OCI-LY7 (cell line): ENCODE measurements at regions of chr18 and their contacts with region 1.

Region 1: DNA sequence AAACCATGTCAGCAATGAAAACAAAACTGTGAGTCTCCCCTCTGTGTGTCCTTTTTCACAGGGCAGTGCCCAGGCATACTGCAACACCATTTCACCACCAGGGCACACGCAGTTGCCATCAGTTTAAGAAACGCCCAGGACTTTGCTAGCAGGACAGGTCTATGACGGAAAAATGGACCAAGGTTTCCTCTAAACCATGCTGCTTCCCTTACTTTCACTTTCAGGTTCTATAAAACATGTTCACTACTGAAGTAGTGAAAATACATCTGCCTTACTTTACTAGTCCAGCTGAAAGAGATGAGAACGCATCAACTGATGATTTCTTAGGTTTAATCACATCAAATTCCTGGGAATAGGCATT is 110.5 kb downstream of the TCF4 start:
- DNase-seq: peak; percentile 42
- H3K4me3 ChIP-seq: peak overlapping the region; percentile 73
- H3K27ac ChIP-seq: peak overlapping the region; percentile 65
- H3K4me1 ChIP-seq: peaks cover 22% of the 10 kb centered on the region
- CTCF ChIP-seq: no peak

Region 2: GRCh38 chr18:55489034-55489986 is 11.8 kb after region 1 on chr18:
- CTCF ChIA-PET with region 1: no interaction called
- POLR2A ChIA-PET with region 1: interaction called, 11 read pairs
- intact Hi-C with region 1: no loop called
- DNase-seq: peak; percentile 49
- H3K4me3 ChIP-seq: peak overlapping the region; percentile 52
- H3K27ac ChIP-seq: peak overlapping the region; percentile 74
- H3K4me1 ChIP-seq: peaks cover 40% of the 10 kb centered on the region
- CTCF ChIP-seq: no peak